ENCODE measurements at regions of chr3 and their contacts with region 1.

Region 1: GRCh38 chr3:73086071-73086494 is 24.6 kb downstream of the EBLN2 start:
- DNase-seq: peak; percentile 40 to 68 (median 64)
- H3K4me3 ChIP-seq: no peak overlapping the region
- H3K27ac ChIP-seq: no peak overlapping the region
- H3K4me1 ChIP-seq: no peaks in the 10 kb centered on the region
- H3K27me3 ChIP-seq: no peaks in the 10 kb centered on the region
- CTCF ChIP-seq: peak; percentile 45 to 72 (median 65)
- EP300 ChIP-seq: no peak
- POLR2A ChIP-seq: no peak

Region 2: GRCh38 chr3:71955240-71956068 is 1130.6 kb before region 1 on chr3:
- intact Hi-C with region 1: loop called in 1 of 4 experiments (anchors 10 kb)
- DNase-seq: peak; percentile 78 to 85 (median 85)
- H3K4me3 ChIP-seq: no peak overlapping the region
- H3K27ac ChIP-seq: no peak overlapping the region
- H3K4me1 ChIP-seq: no peaks in the 10 kb centered on the region
- H3K27me3 ChIP-seq: no peaks in the 10 kb centered on the region
- CTCF ChIP-seq: peak; percentile 47 to 56 (median 48)
- EP300 ChIP-seq: no peak
- POLR2A ChIP-seq: no peak

Region 3: GRCh38 chr3:72847751-72848702 is 238.1 kb before region 1 on chr3 and contains the start of gene SHQ1:
- intact Hi-C with region 1: loop called in 1 of 4 experiments (anchors 10 kb)
- DNase-seq: peak; percentile 96 to 97 (median 96)
- H3K4me3 ChIP-seq: peak within 1 kb of the TSS; percentile 82
- H3K27ac ChIP-seq: peak within 1 kb of the TSS in 1 of 2 donors; percentile 40
- H3K4me1 ChIP-seq: peaks cover 6% of the 10 kb centered on the region
- H3K27me3 ChIP-seq: no peaks in the 10 kb centered on the region
- CTCF ChIP-seq: no peak
- EP300 ChIP-seq: no peak
- POLR2A ChIP-seq: peak; percentile 39
- total RNA-seq, gene SHQ1: 9.7 to 30.0 (median 18.2) TPM